K562 (cell line): ENCODE measurements at regions of chr22 and their contacts with region 1.

Region 1: DNA sequence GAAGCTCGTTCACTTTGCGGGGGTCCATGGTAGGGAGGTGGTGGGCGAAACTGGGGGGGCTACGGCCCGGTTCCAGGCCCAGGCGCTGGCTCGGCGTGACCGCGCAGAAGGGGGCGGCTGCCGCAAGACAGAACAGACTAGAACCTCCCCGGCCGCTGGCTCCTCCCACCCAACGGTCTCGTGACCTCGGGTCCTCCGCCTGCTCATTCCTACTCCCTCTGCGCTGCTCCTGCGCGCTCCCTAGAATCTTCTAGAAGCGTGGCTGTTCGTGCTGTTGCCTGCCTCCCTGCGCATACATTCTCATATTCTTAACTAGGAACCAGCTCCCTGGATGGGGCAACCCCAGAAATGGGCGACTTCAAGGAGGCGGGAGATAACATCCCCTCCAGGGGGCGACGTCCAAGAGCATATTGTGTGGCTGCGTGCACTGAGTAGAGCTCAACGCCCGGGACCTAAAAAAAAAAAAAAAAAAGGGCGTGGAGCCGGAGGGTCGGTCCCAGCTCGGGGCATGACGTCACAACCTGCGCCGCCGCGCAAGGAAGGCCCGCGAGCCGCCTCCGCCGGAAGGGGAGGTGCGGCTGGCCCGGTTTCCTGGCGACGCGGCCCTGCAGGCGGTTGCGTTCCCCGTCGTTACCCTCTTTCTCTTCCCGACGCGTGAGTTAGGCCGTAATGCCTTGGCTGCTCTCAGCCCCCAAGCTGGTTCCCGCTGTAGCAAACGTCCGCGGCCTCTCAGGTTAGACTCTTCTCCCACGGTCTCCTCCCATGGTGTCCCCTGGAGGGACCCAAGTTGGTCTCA is at the starts of genes ST13 and XPNPEP3:
- DNase-seq: peak; percentile 85 to 96 (median 88)
- ATAC-seq: peak; percentile 95
- H3K4me3 ChIP-seq: peak within 1 kb of the TSS; percentile 88
- H3K27ac ChIP-seq: peak within 1 kb of the TSS; percentile 95
- H3K4me1 ChIP-seq: peaks cover 7 to 10% of the 10 kb centered on the region in 2 experiments; a peak in 3 of 5 replicates
- H3K27me3 ChIP-seq: no peaks in the 10 kb centered on the region
- CTCF ChIP-seq: 0 out of 6 replicates have a peak, but pooled peaks of 2 of the 3 experiments have one; percentile 13 to 21
- EP300 ChIP-seq: peak; percentile 17; the same call in 1 of the 2 replicates
- POLR2A ChIP-seq: peak; percentile 77
- RAD21 ChIP-seq: no peak
- polyA plus RNA-seq, gene ST13: 53.6 to 69.7 TPM
- polyA plus RNA-seq, gene XPNPEP3: 18.8 to 20.0 TPM

Region 2: GRCh38 chr22:40818747-40819598 is 37.7 kb before region 1 on chr22 and contains the start of gene SLC25A17:
- CTCF ChIA-PET with region 1: no interaction called
- POLR2A ChIA-PET with region 1: interaction called, 3 read pairs
- in situ Hi-C with region 1: no loop called
- intact Hi-C with region 1: loop called (anchors 5 kb)
- DNase-seq: peak; percentile 89 to 95 (median 93)
- ATAC-seq: peak; percentile 87
- H3K4me3 ChIP-seq: peak within 1 kb of the TSS; percentile 96
- H3K27ac ChIP-seq: peak within 1 kb of the TSS; percentile 89
- H3K4me1 ChIP-seq: peaks cover 13 to 17% of the 10 kb centered on the region in 2 experiments; a peak in 4 of 5 replicates
- H3K27me3 ChIP-seq: no peaks in the 10 kb centered on the region
- CTCF ChIP-seq: peak in 1 of 3 experiments; percentile 39; a peak in 2 of 6 replicates
- EP300 ChIP-seq: no peak
- POLR2A ChIP-seq: peak; percentile 79
- RAD21 ChIP-seq: no peak
- polyA plus RNA-seq, gene SLC25A17: 104 to 136 TPM

Region 3: GRCh38 chr22:40867109-40867508 is 10.4 kb after region 1 on chr22:
- CTCF ChIA-PET with region 1: no interaction called
- POLR2A ChIA-PET with region 1: interaction called, 11 read pairs
- in situ Hi-C with region 1: no loop called
- intact Hi-C with region 1: no loop called
- DNase-seq: no peak
- ATAC-seq: no peak
- H3K4me3 ChIP-seq: no peak overlapping the region
- H3K27ac ChIP-seq: no peak overlapping the region
- H3K4me1 ChIP-seq: no peaks in the 10 kb centered on the region; a peak in 1 of 5 replicates
- H3K27me3 ChIP-seq: no peaks in the 10 kb centered on the region
- CTCF ChIP-seq: no peak
- EP300 ChIP-seq: no peak
- POLR2A ChIP-seq: no peak
- RAD21 ChIP-seq: no peak